Activated naive CD4-positive, alpha-beta T cell treated with anti-CD3 and anti-CD28 coated beads, Interleukin-2, amount 10 ng/mL, durations not matched to agents 7 days and 5 days (primary cell): ENCODE measurements at regions of chr12 and their contacts with region 1.

Region 1: GRCh38 chr12:59403259-59403932 is 192.4 kb upstream of the SLC16A7 start:
- DNase-seq: peak; percentile 49
- H3K4me3 Mint-ChIP-seq: no peak overlapping the region
- H3K27ac Mint-ChIP-seq: no peak overlapping the region
- H3K4me1 Mint-ChIP-seq: peaks cover 8% of the 10 kb centered on the region
- H3K27me3 Mint-ChIP-seq: peaks cover 7% of the 10 kb centered on the region

Region 2: GRCh38 chr12:59808317-59808910 is 405.0 kb after region 1 on chr12:
- CTCF ChIA-PET with region 1: interaction called, 17 read pairs
- DNase-seq: no peak
- H3K4me3 Mint-ChIP-seq: no peak overlapping the region
- H3K27ac Mint-ChIP-seq: no peak overlapping the region
- H3K4me1 Mint-ChIP-seq: no peaks in the 10 kb centered on the region
- H3K27me3 Mint-ChIP-seq: no peaks in the 10 kb centered on the region

Region 3: GRCh38 chr12:59834659-59835474 is 431.5 kb after region 1 on chr12:
- CTCF ChIA-PET with region 1: interaction called, 22 read pairs
- DNase-seq: no peak
- H3K4me3 Mint-ChIP-seq: no peak overlapping the region
- H3K27ac Mint-ChIP-seq: no peak overlapping the region
- H3K4me1 Mint-ChIP-seq: no peaks in the 10 kb centered on the region
- H3K27me3 Mint-ChIP-seq: no peaks in the 10 kb centered on the region